Caco-2 (cell line): ENCODE measurements at regions of chr13 and their contacts with region 1.

Region 1: DNA sequence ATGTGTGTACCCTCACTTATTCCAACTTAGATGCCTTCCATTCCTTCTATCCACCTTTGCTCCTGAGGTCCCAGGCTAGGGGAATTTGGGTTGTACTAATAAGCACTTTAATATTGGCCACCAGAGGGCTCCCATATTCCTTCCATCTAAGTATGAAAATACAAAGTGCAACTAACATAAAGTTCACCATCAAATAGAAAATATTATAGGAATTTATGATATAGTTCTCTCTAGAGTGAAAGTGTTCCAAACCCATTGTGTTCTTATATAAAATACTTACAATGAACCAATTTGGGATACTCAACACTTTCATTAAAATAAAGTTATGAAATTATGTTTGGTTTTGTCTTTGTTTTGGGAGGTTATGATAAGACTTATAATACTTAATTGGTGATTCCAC is 62.3 kb downstream of the ITGBL1 start:
- DNase-seq: peak in 1 of 2 experiments; percentile 47
- H3K4me3 ChIP-seq: no peak overlapping the region
- H3K4me3 Mint-ChIP-seq: no peak overlapping the region
- H3K27ac Mint-ChIP-seq: no peak overlapping the region
- H3K4me1 ChIP-seq: no peaks in the 10 kb centered on the region
- H3K4me1 Mint-ChIP-seq: no peaks in the 10 kb centered on the region
- H3K27me3 ChIP-seq: no peaks in the 10 kb centered on the region
- H3K27me3 Mint-ChIP-seq: peaks cover 3% of the 10 kb centered on the region
- CTCF ChIP-seq: peak; percentile 62 to 77

Region 2: DNA sequence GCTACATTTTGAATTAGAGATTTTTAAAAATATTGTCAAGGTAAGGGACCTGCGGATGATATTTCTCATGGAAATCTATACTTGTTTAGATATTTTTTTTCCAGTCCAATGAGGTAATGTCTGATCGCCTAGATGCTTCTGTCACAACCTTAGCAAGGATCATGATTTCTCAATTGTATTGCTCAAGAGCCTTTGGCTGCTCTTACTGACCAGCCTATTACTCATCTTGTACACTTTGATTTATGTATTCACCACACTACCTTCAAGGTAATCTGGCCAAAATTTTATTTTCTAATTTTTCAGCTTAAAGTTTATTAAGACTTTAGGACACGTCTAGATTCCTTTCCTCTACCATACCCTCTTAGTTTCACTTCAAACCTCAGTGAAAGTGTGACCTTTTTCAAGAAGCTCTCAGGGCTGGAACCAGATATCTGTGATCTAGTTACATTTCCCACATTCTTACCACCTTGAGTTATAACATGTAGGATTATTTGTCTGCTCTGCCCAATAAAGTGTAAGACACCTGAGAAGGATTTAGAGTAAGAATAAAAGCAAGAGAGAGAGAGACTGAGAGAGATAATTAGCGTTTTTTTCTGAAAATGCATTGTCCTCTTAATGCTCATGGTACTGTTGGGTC is 134.8 kb after region 1 on chr13:
- CTCF ChIA-PET with region 1: no interaction called
- POLR2A ChIA-PET with region 1: no interaction called
- intact Hi-C with region 1: no loop called
- DNase-seq: no peak
- H3K4me3 ChIP-seq: no peak overlapping the region
- H3K4me3 Mint-ChIP-seq: no peak overlapping the region
- H3K27ac Mint-ChIP-seq: no peak overlapping the region
- H3K4me1 ChIP-seq: no peaks in the 10 kb centered on the region
- H3K4me1 Mint-ChIP-seq: no peaks in the 10 kb centered on the region
- H3K27me3 ChIP-seq: no peaks in the 10 kb centered on the region
- H3K27me3 Mint-ChIP-seq: no peaks in the 10 kb centered on the region
- CTCF ChIP-seq: no peak

Region 3: GRCh38 chr13:101673360-101674105 is 158.7 kb after region 1 on chr13:
- CTCF ChIA-PET with region 1: no interaction called
- POLR2A ChIA-PET with region 1: no interaction called
- intact Hi-C with region 1: no loop called
- DNase-seq: no peak
- H3K4me3 ChIP-seq: no peak overlapping the region
- H3K4me3 Mint-ChIP-seq: no peak overlapping the region
- H3K27ac Mint-ChIP-seq: no peak overlapping the region
- H3K4me1 ChIP-seq: no peaks in the 10 kb centered on the region
- H3K4me1 Mint-ChIP-seq: no peaks in the 10 kb centered on the region
- H3K27me3 ChIP-seq: no peaks in the 10 kb centered on the region; the same call in 1 of the 2 replicates
- H3K27me3 Mint-ChIP-seq: no peaks in the 10 kb centered on the region
- CTCF ChIP-seq: no peak

Region 4: GRCh38 chr13:101757446-101758039 is 242.8 kb after region 1 on chr13:
- CTCF ChIA-PET with region 1: no interaction called
- POLR2A ChIA-PET with region 1: no interaction called
- intact Hi-C with region 1: loop called (anchors 1 kb)
- DNase-seq: no peak
- H3K4me3 ChIP-seq: no peak overlapping the region
- H3K4me3 Mint-ChIP-seq: no peak overlapping the region
- H3K27ac Mint-ChIP-seq: no peak overlapping the region
- H3K4me1 ChIP-seq: no peaks in the 10 kb centered on the region
- H3K4me1 Mint-ChIP-seq: no peaks in the 10 kb centered on the region
- H3K27me3 ChIP-seq: no peaks in the 10 kb centered on the region
- H3K27me3 Mint-ChIP-seq: peaks cover 3% of the 10 kb centered on the region
- CTCF ChIP-seq: peak; percentile 16 to 41